ENCODE measurements at regions of chr5 and their contacts with region 1.

Region 1: DNA sequence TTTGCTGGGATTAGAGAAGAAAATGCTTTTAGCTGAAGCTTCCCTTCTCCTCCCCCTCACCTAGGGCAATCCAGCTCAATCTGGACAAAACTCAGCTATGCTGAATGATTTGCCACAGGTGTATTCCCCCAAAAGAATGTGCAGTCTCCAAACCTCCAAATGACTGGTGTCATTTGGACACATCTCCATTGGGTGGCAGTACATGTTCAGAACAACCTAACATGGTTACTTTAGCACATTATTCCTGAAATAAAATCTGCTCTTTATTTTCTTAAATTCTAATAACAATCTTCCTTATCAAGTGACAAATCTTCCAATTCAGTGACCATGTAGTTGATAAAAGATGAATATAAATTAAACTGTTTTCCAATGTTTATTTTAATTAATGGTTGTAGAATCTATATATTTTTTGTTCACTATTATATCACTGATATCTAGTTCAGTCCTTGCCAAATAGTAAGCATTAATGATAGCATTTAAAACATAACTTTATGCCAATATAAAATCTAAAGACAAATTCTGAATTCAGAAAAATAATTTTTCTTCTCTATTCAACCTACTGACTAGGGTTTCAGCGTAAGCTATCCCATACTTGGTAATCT is 61.3 kb upstream of the MOCS2 start:
- DNase-seq: no peak
- H3K4me3 ChIP-seq: no peak overlapping the region
- H3K27ac ChIP-seq: no peak overlapping the region
- H3K27me3 ChIP-seq: no peaks in the 10 kb centered on the region
- CTCF ChIP-seq: peak; percentile 76

Region 2: DNA sequence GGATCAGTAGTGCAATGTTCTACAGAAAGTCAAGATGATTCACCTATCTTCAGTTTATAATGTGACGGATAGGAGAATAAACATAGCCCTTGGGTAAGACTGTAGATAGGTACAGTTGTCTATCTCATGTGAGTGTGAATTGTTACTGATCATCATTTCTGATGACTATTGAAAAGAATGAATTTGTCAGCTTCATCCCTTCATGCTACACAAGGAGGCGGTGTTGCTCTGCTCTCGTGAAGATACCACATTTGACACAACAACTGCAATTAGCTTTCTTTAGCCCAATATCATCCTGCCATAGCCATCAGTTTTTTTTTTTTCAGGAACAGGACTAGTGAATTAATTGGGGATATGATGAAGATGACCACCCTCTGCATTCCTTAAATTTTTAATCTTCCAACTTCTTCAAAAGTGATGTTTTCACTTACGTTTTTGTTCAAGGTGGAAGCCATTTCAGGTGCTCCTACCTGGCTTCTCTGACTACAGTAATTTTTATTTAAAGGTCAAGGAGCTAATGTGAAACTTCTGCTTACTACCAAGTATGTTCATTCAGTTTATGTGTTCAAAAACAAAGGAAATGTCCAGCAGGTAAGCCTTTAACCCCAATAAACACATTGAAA is 91.6 kb after region 1 on chr5:
- CTCF ChIA-PET with region 1: interaction called, 12 read pairs
- POLR2A ChIA-PET with region 1: no interaction called
- DNase-seq: no peak
- H3K4me3 ChIP-seq: no peak overlapping the region
- H3K27ac ChIP-seq: no peak overlapping the region
- H3K27me3 ChIP-seq: no peaks in the 10 kb centered on the region
- CTCF ChIP-seq: peak; percentile 71

Region 3: GRCh38 chr5:53430261-53431252 is 259.7 kb after region 1 on chr5:
- CTCF ChIA-PET with region 1: interaction called, 23 read pairs
- POLR2A ChIA-PET with region 1: no interaction called
- DNase-seq: no peak
- H3K4me3 ChIP-seq: no peak overlapping the region
- H3K27ac ChIP-seq: peak overlapping the region; percentile 54
- H3K27me3 ChIP-seq: no peaks in the 10 kb centered on the region
- CTCF ChIP-seq: peak; percentile 68

Region 4: DNA sequence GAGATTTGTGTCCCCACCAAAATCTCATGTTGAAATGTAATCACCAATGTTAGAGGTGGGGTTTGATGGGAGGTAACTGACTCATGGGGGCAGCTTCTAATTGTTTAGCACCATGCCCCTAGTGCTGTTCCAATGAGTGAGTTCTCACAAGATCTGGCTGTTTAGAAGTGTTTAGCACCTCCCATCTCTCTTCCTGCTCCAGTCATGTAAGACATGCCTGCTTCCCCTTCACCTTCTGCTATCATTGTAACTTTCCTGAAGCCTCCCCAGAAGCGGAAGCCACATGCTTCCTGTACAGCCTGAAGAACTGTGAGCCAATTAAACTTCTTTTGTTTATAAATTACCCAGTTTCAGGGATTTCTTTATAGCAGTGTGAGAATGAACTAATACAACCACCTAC is 560.1 kb after region 1 on chr5:
- CTCF ChIA-PET with region 1: no interaction called
- POLR2A ChIA-PET with region 1: no interaction called
- DNase-seq: no peak
- H3K4me3 ChIP-seq: no peak overlapping the region
- H3K27ac ChIP-seq: no peak overlapping the region
- H3K27me3 ChIP-seq: no peaks in the 10 kb centered on the region
- CTCF ChIP-seq: no peak

Measured in AG04450 (cell line).